Lower lobe of right lung (tissue), 2 donors: ENCODE measurements at regions of chr6 and their contacts with region 1.

Region 1: GRCh38 chr6:150741633-150742504 is 123.6 kb upstream of the MTHFD1L start:
- DNase-seq: no peak
- ATAC-seq: peak in 1 of 2 donors; percentile 38
- H3K4me3 ChIP-seq: no peak overlapping the region
- H3K27ac ChIP-seq: no peak overlapping the region
- H3K4me1 ChIP-seq: no peaks in the 10 kb centered on the region
- H3K27me3 ChIP-seq: no peaks in the 10 kb centered on the region
- CTCF ChIP-seq: peak; percentile 55

Region 2: DNA sequence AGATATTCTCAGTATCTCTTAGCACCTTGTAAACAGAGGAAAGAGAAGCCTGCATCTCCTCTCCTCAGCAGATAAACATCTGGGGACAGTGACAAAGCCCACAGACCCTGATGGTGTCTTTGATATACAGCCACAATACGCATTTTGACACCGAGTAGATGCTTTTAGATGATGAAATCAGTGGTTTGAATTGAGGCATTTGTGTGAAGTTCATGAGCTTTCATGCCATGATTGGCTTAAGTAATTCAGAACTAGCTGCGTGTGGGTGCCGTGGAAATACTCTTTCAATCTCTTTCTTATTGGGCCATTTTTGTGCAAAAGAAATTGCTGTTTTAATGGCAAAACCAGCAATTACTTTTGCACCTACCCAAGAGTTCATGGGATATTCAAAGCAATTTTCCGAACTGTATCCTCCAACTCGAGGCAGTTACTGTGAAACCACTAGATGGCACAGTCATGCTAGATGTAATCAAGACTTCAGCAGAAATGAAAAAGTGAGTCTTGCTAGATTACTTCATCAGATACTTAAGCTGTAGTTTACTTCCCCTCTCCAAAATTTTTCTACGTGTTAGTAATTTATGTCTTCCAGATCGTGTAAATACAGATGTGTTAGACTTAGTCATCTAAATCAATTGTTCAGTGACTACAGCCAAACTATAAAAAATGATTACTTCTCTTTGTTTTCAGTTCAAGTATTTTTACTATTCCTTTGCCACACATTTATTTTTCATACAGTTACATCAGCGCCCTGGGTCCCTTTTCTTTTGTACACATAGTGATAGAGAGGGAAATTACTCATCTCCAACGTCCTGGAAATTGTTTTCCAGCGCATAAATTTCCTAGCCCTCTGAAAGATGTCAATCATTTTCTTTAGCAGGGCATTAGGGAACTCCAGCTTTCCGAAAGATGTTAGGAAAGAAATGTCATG is 323.7 kb before region 1 on chr6:
- intact Hi-C with region 1: loop called (anchors 10 kb)
- DNase-seq: no peak
- ATAC-seq: peak; percentile 88 to 96
- H3K4me3 ChIP-seq: peak overlapping the region; percentile 49
- H3K27ac ChIP-seq: peak overlapping the region; percentile 64
- H3K4me1 ChIP-seq: peaks cover 12% of the 10 kb centered on the region
- H3K27me3 ChIP-seq: no peaks in the 10 kb centered on the region
- CTCF ChIP-seq: peak; percentile 79

Region 3: GRCh38 chr6:150775415-150776203 is 33.7 kb after region 1 on chr6:
- intact Hi-C with region 1: no loop called
- DNase-seq: no peak
- ATAC-seq: no peak
- H3K4me3 ChIP-seq: no peak overlapping the region
- H3K27ac ChIP-seq: no peak overlapping the region
- H3K4me1 ChIP-seq: no peaks in the 10 kb centered on the region
- H3K27me3 ChIP-seq: no peaks in the 10 kb centered on the region
- CTCF ChIP-seq: no peak